OCI-LY7 (cell line): ENCODE measurements at regions of chr5 and their contacts with region 1.

Region 1: GRCh38 chr5:180860887-180861822 is at the start of gene ZFP62:
- DNase-seq: peak; percentile 96
- H3K4me3 ChIP-seq: peak within 1 kb of the TSS; percentile 96
- H3K27ac ChIP-seq: peak within 1 kb of the TSS; percentile 95
- H3K4me1 ChIP-seq: peaks cover 18% of the 10 kb centered on the region
- CTCF ChIP-seq: no peak
- total RNA-seq, gene ZFP62: 58.4 and 59.0 TPM in 2 replicates

Region 2: DNA sequence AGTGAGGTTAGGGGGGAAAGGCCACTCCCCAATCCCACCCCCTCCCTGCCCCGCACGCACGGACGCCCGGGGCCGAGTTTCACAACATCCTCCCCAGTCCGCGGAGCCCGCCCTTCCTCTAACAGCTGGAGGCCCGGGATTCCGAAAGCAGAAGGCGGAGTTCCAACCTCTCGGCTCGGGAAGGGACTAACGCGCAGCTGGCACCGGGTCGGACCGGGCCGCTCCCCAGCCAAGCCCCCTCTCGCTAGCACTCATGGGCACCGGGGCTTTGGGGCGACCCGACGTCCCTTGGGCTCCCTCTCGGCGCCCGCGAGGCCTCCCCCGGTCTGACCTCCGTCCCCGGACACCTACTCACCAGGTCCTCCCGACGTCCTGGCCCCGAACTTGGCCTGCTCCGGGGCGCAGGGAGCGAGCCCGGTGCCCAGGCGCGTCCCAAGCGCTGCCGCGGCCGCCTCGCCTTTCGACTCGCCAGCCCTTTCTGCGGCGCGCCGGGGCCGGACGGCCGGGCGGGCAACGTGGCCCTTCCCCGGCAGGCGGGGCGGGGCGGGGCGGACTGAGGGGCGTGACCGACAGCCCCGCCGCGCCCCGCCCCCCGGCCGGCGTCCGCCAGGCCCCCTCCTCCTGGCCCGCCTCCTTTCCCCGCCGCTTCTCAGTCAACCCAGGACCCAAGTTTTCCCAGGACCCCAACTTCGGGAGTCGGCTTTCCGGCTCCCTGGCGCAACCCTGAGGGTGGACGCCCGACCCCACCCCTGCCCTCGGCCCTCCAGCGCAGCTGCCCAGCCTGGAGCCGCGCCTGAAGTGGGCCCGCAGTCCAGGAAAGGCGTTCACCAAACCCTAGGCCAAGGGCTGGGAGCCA is 58.6 kb before region 1 on chr5 and contains the start of gene MGAT1:
- CTCF ChIA-PET with region 1: no interaction called
- POLR2A ChIA-PET with region 1: interaction called, 4 read pairs
- intact Hi-C with region 1: loop called (anchors 2 kb)
- DNase-seq: peak; percentile 75
- H3K4me3 ChIP-seq: peak within 1 kb of the TSS; percentile 84
- H3K27ac ChIP-seq: peak within 1 kb of the TSS; percentile 96
- H3K4me1 ChIP-seq: peaks cover 80% of the 10 kb centered on the region
- CTCF ChIP-seq: no peak
- total RNA-seq, gene MGAT1: 65.2 and 75.4 TPM in 2 replicates

Region 3: DNA sequence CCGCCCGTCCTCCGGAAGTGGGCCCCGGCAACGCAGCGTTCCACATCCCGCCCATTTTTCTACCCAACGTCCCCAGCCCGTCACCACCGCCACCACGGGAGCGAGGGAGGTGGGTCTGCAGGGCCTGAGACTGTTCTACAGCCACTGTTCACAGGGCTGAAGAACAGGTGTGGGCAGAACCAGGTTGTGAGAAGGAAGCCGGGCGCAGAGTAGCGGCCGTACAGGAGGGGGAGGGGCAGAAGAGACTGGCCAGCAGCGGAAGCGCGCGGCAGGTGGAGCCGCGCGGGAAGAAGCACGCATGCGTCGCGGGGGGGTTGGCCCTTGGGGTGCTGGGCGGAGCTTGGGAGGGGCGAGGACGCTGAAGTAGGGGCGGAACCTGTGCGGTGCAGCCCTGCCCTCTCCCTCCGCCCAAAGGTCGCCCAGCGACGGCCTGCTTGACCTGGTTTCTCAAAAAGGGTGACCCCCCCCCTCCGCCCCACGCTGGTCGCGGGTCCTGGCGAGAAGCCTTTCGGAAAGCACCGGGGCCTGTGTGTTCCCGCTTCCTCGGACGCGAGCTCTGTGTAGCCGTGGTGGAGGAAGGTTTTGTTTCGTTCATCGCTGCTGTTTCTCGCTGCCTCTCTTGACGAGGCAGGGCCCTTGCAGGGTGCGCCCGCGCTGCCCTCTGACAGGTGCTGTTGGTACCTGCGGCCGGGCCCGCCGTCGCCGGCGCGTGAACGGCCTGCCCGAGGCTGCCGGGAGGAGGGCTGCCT is 50.8 kb before region 1 on chr5:
- CTCF ChIA-PET with region 1: no interaction called
- POLR2A ChIA-PET with region 1: interaction called, 4 read pairs
- intact Hi-C with region 1: loop called (anchors 2 kb)
- DNase-seq: peak; percentile 96
- H3K4me3 ChIP-seq: peak overlapping the region; percentile 84
- H3K27ac ChIP-seq: peak overlapping the region; percentile 96
- H3K4me1 ChIP-seq: peaks cover 79% of the 10 kb centered on the region
- CTCF ChIP-seq: no peak

Region 4: DNA sequence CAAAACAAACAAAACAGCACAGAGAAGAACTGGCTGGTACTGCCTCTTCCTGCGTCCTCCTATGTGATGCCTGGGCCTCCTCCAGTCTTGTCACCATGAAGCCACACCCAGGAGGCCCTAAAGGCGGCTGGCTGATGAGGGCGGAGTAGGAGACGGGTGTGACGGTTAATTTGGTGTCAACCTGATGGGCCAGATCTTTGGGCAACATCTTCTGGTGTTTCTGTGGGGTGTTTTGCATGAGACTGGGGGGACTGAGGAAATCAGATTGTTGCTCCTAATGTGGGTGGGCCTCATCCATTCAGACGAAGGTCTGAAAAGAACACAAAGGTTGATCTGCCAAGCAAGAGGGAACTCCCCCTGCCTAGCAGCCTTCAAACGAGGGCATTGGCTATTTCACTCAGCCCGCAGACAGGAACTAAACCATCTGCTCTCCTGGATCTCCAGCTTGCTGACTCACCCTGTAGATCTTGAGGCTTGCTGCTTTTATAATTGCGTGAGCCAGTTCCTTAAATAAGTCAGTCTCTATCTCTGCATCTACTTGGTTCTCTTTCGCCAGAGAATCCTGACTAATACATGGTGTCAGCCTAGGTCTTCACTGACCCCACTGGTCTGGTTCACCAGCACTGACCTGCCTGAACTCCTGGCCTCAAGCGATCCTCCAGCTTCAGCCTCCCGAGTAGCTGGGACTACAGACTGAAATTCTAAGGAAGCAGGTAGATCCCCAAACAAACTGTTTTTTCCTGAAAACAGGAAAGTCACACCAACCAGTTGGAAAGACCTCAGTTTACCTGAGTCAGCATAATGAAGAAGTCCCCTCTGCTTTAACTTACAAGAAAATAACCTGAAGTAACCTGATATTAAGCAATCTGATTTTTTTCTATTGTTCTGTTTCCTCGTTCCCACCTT is 12.7 kb after region 1 on chr5:
- CTCF ChIA-PET with region 1: no interaction called
- POLR2A ChIA-PET with region 1: no interaction called
- intact Hi-C with region 1: no loop called
- DNase-seq: peak; percentile 53
- H3K4me3 ChIP-seq: no peak overlapping the region
- H3K27ac ChIP-seq: no peak overlapping the region
- H3K4me1 ChIP-seq: peaks cover 16% of the 10 kb centered on the region
- CTCF ChIP-seq: no peak

Region 5: DNA sequence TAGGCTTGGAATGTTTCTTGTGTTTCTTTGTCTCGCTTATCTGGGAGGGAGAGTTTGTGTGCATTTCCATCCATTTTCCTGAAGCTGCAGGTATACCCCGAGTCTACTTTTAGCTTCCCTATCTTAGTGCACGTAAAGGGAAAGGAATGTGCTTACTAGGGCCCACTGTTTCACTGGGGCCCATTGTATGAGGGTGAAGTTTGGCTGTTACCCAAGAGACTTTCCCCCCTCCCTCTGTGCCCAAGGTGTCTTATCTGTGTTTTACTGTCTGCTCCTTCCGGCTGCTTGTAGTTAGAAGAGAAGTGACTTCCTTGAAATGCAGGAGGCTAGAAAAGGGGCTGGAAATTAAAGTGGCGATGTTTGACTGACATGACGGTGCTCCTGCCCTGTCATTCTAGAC is 115.4 kb after region 1 on chr5:
- CTCF ChIA-PET with region 1: no interaction called
- POLR2A ChIA-PET with region 1: no interaction called
- intact Hi-C with region 1: no loop called
- DNase-seq: peak; percentile 2
- H3K4me3 ChIP-seq: no peak overlapping the region
- H3K27ac ChIP-seq: no peak overlapping the region
- H3K4me1 ChIP-seq: peaks cover 3% of the 10 kb centered on the region
- CTCF ChIP-seq: no peak

Region 6: GRCh38 chr5:181043285-181044092 is 182.3 kb after region 1 on chr5:
- CTCF ChIA-PET with region 1: no interaction called
- POLR2A ChIA-PET with region 1: interaction called, 5 read pairs
- intact Hi-C with region 1: loop called (anchors 2 kb)
- DNase-seq: peak; percentile 67
- H3K4me3 ChIP-seq: peak overlapping the region; percentile 64
- H3K27ac ChIP-seq: peak overlapping the region; percentile 84
- H3K4me1 ChIP-seq: peaks cover 53% of the 10 kb centered on the region
- CTCF ChIP-seq: peak; percentile 75